ENCODE measurements at regions of chr7 and their contacts with region 1.

Region 1: GRCh38 chr7:98106647-98107445 is at the start of gene LMTK2:
- DNase-seq: peak; percentile 90 to 99 (median 98)
- ATAC-seq: peak; percentile 98 to 99 (median 98)
- H3K4me3 ChIP-seq: peak within 1 kb of the TSS; percentile 98 to 100 (median 100)
- H3K27ac ChIP-seq: peak within 1 kb of the TSS; percentile 86 to 91 (median 88)
- H3K4me1 ChIP-seq: peaks cover 0 to 37% (median 31%) of the 10 kb centered on the region in 3 donors
- H3K27me3 ChIP-seq: no peaks in the 10 kb centered on the region
- CTCF ChIP-seq: peak; percentile 82 to 95 (median 86)
- total RNA-seq, gene LMTK2: 15.2 to 20.0 (median 17.4) TPM

Region 2: GRCh38 chr7:98021588-98022351 is 85.1 kb before region 1 on chr7:
- intact Hi-C with region 1: loop called in 1 of 3 experiments (anchors 5 kb)
- DNase-seq: peak; percentile 62 to 98 (median 84)
- ATAC-seq: peak; percentile 96 to 100 (median 98)
- H3K4me3 ChIP-seq: no peak overlapping the region
- H3K27ac ChIP-seq: no peak overlapping the region
- H3K4me1 ChIP-seq: no peaks in the 10 kb centered on the region
- H3K27me3 ChIP-seq: no peaks in the 10 kb centered on the region
- CTCF ChIP-seq: peak; percentile 84 to 95 (median 94)

Region 3: GRCh38 chr7:98168181-98168905 is 61.5 kb after region 1 on chr7:
- intact Hi-C with region 1: loop called in 2 of 3 experiments (anchors 5 kb)
- DNase-seq: peak in 4 of 6 donors; percentile 64 to 77 (median 72)
- ATAC-seq: peak; percentile 69 to 81 (median 72)
- H3K4me3 ChIP-seq: no peak overlapping the region
- H3K27ac ChIP-seq: peak overlapping the region in 2 of 4 donors; percentile 75 to 83
- H3K4me1 ChIP-seq: peaks cover 25 to 51% (median 31%) of the 10 kb centered on the region in 3 donors
- H3K27me3 ChIP-seq: no peaks in the 10 kb centered on the region
- CTCF ChIP-seq: peak; percentile 58 to 81 (median 74)

Region 4: GRCh38 chr7:98206451-98207330 is 99.8 kb after region 1 on chr7:
- intact Hi-C with region 1: no loop called
- DNase-seq: peak in 3 of 6 donors; percentile 8 to 53 (median 49)
- ATAC-seq: no peak
- H3K4me3 ChIP-seq: no peak overlapping the region
- H3K27ac ChIP-seq: no peak overlapping the region
- H3K4me1 ChIP-seq: no peaks in the 10 kb centered on the region
- H3K27me3 ChIP-seq: no peaks in the 10 kb centered on the region
- CTCF ChIP-seq: no peak

Region 5: GRCh38 chr7:98217623-98218582 is 111.1 kb after region 1 on chr7:
- intact Hi-C with region 1: no loop called
- DNase-seq: peak; percentile 40 to 90 (median 70)
- ATAC-seq: peak; percentile 10 to 17 (median 12)
- H3K4me3 ChIP-seq: peak overlapping the region in 1 of 4 donors; percentile 10
- H3K27ac ChIP-seq: peak overlapping the region; percentile 20 to 82 (median 64)
- H3K4me1 ChIP-seq: peaks cover 12 to 28% (median 12%) of the 10 kb centered on the region in 3 donors
- H3K27me3 ChIP-seq: no peaks in the 10 kb centered on the region
- CTCF ChIP-seq: no peak

Region 6: DNA sequence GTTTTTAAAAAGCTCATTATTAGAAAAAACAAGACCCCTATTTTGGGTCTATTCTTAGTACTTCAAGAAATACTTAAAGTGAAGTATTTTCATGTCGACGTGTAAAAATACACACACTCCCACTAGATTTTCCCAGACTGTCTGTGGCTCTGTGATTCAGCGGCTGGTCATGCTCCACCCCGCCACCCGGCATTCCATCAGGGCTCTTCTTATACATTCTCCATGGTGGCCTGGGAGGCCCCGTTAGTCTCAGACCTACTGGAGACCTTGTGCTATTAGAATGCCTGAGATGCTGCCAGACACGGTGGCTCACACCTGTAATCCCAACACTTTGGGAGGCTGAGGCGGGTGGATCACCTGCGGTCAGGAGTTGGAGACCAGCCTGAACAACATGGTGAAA is 132.1 kb after region 1 on chr7:
- intact Hi-C with region 1: loop called in 1 of 3 experiments (anchors 10 kb)
- DNase-seq: no peak
- ATAC-seq: no peak
- H3K4me3 ChIP-seq: no peak overlapping the region
- H3K27ac ChIP-seq: no peak overlapping the region
- H3K4me1 ChIP-seq: no peaks in the 10 kb centered on the region
- H3K27me3 ChIP-seq: no peaks in the 10 kb centered on the region
- CTCF ChIP-seq: no peak